HCT116 (cell line): ENCODE measurements at regions of chr11 and their contacts with region 1.

Region 1: DNA sequence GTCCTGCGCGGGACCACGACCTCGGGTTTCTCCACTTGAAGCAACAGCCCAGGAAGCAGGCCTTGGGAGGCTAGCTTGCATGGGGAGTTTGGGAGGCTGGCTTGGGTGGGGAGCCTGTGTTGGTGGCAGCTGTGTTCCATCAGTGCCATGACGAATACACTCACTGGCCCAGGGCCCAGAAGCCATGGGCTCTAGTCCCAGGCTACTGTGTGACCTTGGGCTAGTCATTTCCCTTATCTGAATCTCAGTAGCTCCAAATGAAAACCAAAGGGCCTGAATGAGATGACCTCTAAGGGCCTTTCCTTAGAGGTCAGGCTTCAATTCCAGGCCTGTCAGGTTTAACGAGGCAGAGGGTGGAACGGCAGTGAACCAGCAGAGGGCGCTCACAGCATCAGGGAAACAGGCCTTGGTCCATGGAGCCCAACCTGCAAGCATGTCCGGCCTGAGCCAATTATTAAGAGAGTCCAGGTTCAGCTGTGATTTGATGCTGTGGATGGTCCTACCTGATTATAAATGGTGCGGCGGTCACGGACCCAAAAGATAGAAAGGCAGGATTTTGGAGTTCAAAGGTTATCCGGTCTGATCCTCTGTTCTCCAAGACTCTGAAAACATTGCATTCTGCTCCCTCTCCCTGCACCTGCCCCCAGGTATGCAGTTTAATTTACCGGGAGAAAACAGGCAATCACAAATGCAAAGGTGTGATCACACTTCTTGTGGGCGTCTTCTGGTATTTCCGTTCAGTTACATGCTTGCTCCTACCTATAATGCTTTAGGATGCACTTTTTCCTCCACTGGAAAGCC is 15.9 kb downstream of the PTPN5 start:
- DNase-seq: peak; percentile 64
- ATAC-seq: peak; percentile 97
- H3K4me3 ChIP-seq: no peak overlapping the region
- H3K27ac ChIP-seq: no peak overlapping the region
- H3K4me1 ChIP-seq: no peaks in the 10 kb centered on the region
- H3K27me3 ChIP-seq: no peaks in the 10 kb centered on the region
- CTCF ChIP-seq: peak; percentile 78 to 96 (median 96)
- POLR2A ChIP-seq: no peak
- RAD21 ChIP-seq: peak; percentile 83

Region 2: GRCh38 chr11:18802381-18803257 is 26.9 kb after region 1 on chr11:
- CTCF ChIA-PET with region 1: interaction called, 13 read pairs
- POLR2A ChIA-PET with region 1: no interaction called
- RAD21 ChIA-PET with region 1: no interaction called
- intact Hi-C with region 1: loop called (anchors 1 kb)
- DNase-seq: peak; percentile 58
- ATAC-seq: peak; percentile 88
- H3K4me3 ChIP-seq: no peak overlapping the region; a peak in 1 of 4 replicates
- H3K27ac ChIP-seq: no peak overlapping the region
- H3K4me1 ChIP-seq: peaks cover 0 to 4% of the 10 kb centered on the region in 2 experiments; a peak in 1 of 4 replicates
- H3K27me3 ChIP-seq: peaks cover 13% of the 10 kb centered on the region; the same call in 1 of the 2 replicates
- CTCF ChIP-seq: peak; percentile 55 to 76 (median 76); a peak in 5 of 6 replicates
- POLR2A ChIP-seq: no peak
- RAD21 ChIP-seq: peak; percentile 72

Region 3: GRCh38 chr11:18853086-18853720 is 77.5 kb after region 1 on chr11:
- CTCF ChIA-PET with region 1: interaction called, 3 read pairs
- POLR2A ChIA-PET with region 1: no interaction called
- RAD21 ChIA-PET with region 1: no interaction called
- intact Hi-C with region 1: loop called (anchors 1 kb)
- DNase-seq: peak; percentile 21
- ATAC-seq: peak; percentile 96
- H3K4me3 ChIP-seq: no peak overlapping the region
- H3K27ac ChIP-seq: no peak overlapping the region
- H3K4me1 ChIP-seq: no peaks in the 10 kb centered on the region
- H3K27me3 ChIP-seq: peaks cover 45% of the 10 kb centered on the region
- CTCF ChIP-seq: peak; percentile 47 to 73 (median 62); a peak in 5 of 6 replicates
- POLR2A ChIP-seq: no peak
- RAD21 ChIP-seq: peak; percentile 75

Region 4: DNA sequence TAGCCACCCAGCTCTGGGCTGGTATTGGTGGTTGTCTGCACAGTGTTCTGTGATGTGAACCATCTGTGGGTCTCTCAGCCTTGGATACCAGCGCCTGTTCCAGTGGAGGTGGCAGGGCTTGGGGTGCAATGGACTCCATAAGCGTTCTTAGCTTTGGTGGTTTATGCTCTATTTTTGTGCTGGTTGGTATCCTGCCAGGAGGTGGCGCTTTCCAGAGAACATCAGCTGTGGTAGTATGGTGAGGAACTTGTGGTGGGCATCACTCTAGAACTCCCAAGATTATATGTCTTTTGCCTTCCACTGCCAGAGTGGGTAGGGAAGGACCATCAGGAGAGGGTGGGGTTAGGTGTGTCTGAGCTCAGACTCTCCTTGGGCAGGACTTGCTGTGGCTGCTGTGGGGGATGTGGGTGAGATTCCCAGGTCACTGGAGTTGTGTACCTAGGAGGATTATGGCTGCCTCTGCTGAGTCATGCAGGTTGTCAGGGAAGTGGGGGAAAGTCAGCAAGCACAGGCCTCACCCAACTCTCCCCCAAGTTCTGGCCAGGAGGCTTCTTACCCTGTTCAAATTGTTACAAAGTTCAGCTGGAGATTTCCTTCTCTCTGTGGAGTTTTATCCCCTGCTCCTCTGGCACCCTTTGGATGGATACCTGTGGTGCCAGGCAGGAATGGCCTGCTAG is 237.6 kb after region 1 on chr11:
- CTCF ChIA-PET with region 1: no interaction called
- POLR2A ChIA-PET with region 1: no interaction called
- RAD21 ChIA-PET with region 1: no interaction called
- intact Hi-C with region 1: no loop called
- DNase-seq: no peak
- ATAC-seq: peak; percentile 66
- H3K4me3 ChIP-seq: no peak overlapping the region
- H3K27ac ChIP-seq: no peak overlapping the region
- H3K4me1 ChIP-seq: 0 out of 4 replicates have a peak, but pooled peaks cover 0 to 3% of the 10 kb centered on the region in 2 experiments
- H3K27me3 ChIP-seq: peaks cover 17% of the 10 kb centered on the region
- CTCF ChIP-seq: peak in 2 of 3 experiments; percentile 60 to 63; a peak in 4 of 6 replicates
- POLR2A ChIP-seq: no peak
- RAD21 ChIP-seq: no peak